A673 (cell line): ENCODE measurements at regions of chr12 and their contacts with region 1.

Region 1: DNA sequence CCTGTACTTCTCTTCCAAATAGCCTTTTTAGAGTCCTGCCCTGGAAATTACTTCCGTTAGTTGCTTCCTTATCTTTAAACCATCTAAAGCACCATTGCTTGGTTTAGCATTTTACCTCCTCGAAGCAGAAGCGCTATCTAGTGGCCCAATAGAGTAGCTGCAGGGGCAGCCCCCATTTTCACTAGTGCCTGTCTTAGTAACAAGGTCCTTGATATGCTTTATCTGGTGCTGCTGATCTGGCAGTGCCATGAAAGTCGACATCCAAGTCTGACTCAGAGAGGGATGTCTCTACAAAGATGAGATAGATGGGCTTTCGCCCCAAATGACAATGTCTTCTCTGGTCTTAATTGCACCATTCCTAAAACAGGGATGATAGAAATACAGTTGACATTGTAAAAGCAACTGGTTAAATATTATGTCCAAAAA is 25.0 kb upstream of the CIT start:
- DNase-seq: peak; percentile 73
- H3K4me3 ChIP-seq: no peak overlapping the region
- H3K27ac ChIP-seq: no peak overlapping the region
- H3K4me1 ChIP-seq: no peaks in the 10 kb centered on the region
- H3K27me3 ChIP-seq: no peaks in the 10 kb centered on the region
- CTCF ChIP-seq: peak; percentile 90

Region 2: DNA sequence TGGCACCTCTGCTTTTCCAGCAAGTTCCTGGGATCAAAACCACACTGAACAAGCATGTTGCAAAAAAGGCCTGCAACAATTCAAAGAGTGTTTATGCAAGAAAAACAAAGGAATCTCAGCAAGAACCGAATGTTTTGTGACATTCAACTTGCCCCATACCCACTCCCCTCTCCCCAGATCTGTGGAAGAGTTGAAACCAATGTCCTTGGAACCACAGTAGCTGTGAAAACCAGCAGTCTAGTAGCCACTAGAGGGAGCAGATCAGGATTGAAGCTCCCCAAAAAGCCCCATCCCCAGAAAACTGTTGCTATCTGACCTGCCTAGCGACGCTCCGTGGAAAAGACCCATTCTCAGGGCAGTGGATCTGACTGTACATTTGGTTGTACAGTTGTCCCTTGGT is 207.1 kb before region 1 on chr12:
- CTCF ChIA-PET with region 1: interaction called, 6 read pairs
- POLR2A ChIA-PET with region 1: no interaction called
- intact Hi-C with region 1: loop called (anchors 5 kb)
- DNase-seq: peak; percentile 14
- H3K4me3 ChIP-seq: no peak overlapping the region
- H3K27ac ChIP-seq: no peak overlapping the region
- H3K4me1 ChIP-seq: peaks cover 26% of the 10 kb centered on the region
- H3K27me3 ChIP-seq: no peaks in the 10 kb centered on the region
- CTCF ChIP-seq: peak; percentile 61

Region 3: GRCh38 chr12:119804011-119804641 is 98.0 kb before region 1 on chr12:
- CTCF ChIA-PET with region 1: no interaction called
- POLR2A ChIA-PET with region 1: no interaction called
- intact Hi-C with region 1: loop called (anchors 5 kb)
- DNase-seq: peak; percentile 68
- H3K4me3 ChIP-seq: no peak overlapping the region
- H3K27ac ChIP-seq: no peak overlapping the region
- H3K4me1 ChIP-seq: no peaks in the 10 kb centered on the region
- H3K27me3 ChIP-seq: no peaks in the 10 kb centered on the region
- CTCF ChIP-seq: peak; percentile 54

Region 4: GRCh38 chr12:119876761-119877638 is 25.1 kb before region 1 on chr12 and contains the start of gene CIT:
- CTCF ChIA-PET with region 1: no interaction called
- POLR2A ChIA-PET with region 1: no interaction called
- intact Hi-C with region 1: no loop called
- DNase-seq: peak; percentile 98
- H3K4me3 ChIP-seq: peak within 1 kb of the TSS; percentile 92
- H3K27ac ChIP-seq: peak within 1 kb of the TSS; percentile 85
- H3K4me1 ChIP-seq: peaks cover 4% of the 10 kb centered on the region
- H3K27me3 ChIP-seq: no peaks in the 10 kb centered on the region
- CTCF ChIP-seq: no peak
- total RNA-seq, gene CIT: 62.4 and 73.7 TPM in 2 replicates

Region 5: DNA sequence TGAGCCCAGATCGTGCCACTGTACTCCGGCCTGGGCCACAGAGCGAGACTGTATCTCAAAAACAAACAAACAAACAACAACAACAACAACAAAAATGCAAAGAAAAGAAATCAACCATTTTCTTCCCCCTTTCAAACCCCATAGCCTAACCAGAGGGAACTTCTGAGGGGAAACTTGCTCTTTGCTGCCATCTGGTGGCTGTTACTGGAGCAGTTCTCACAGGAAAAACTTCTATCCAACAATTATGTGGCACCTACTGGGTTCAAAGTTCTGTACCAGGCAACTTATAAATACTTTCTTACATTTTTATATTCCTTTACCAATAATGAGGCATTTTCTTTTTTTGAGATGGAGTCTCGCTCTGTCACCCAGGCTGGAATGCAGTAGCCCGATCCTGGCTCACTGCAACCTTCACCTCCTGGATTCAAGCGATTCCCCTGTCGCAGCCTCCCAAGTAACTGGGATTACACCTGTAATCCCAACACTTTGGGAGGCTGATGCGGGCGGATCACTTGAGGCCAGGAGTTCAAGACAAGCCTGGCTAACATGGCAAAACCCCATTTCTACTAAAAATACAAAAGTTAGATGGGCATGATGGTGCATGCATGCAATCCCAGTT is 36.1 kb after region 1 on chr12:
- CTCF ChIA-PET with region 1: no interaction called
- POLR2A ChIA-PET with region 1: no interaction called
- intact Hi-C with region 1: no loop called
- DNase-seq: peak; percentile 70
- H3K4me3 ChIP-seq: no peak overlapping the region
- H3K27ac ChIP-seq: no peak overlapping the region
- H3K4me1 ChIP-seq: no peaks in the 10 kb centered on the region
- H3K27me3 ChIP-seq: no peaks in the 10 kb centered on the region
- CTCF ChIP-seq: peak; percentile 84

Region 6: GRCh38 chr12:120677765-120678473 is 775.8 kb after region 1 on chr12:
- CTCF ChIA-PET with region 1: no interaction called
- POLR2A ChIA-PET with region 1: no interaction called
- intact Hi-C with region 1: no loop called
- DNase-seq: peak; percentile 60
- H3K4me3 ChIP-seq: no peak overlapping the region
- H3K27ac ChIP-seq: no peak overlapping the region
- H3K4me1 ChIP-seq: peaks cover 7% of the 10 kb centered on the region
- H3K27me3 ChIP-seq: no peaks in the 10 kb centered on the region
- CTCF ChIP-seq: no peak